Head of caudate nucleus (tissue), 42 donors: ENCODE measurements at regions of chr12 and their contacts with region 1.

Region 1: GRCh38 chr12:48105862-48106680 is at the start of gene SENP1:
- DNase-seq: peak; percentile 75 to 96 (median 92)

Region 2: GRCh38 chr12:48157018-48157888 is 51.2 kb after region 1 on chr12 and contains the start of gene ASB8:
- intact Hi-C with region 1: loop called (anchors 2 kb)
- DNase-seq: peak; percentile 94 to 100 (median 99)

Region 3: DNA sequence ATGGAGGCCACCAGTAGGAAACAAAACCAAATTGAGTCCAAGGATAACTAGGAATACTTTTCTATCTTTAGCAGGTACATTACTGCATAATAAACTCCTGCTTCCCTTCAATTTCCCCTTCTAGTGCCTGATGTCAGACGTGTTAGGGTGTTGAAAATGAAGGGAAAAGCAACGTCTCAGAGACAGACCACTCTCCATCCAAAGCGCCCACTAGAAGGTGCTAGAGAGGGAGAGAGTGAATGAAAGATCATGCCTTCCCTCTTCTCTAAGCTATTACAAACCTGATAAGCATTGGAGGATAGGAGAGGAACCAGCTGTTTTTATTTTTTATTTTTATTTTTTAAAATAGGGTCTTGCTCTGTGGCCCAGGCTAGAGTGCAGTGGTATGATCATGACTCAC is 180.6 kb after region 1 on chr12:
- intact Hi-C with region 1: no loop called
- DNase-seq: peak in 2 of 42 donors; percentile 4 to 10